Astrocyte of the cerebellum (primary cell): ENCODE measurements at regions of chr17 and their contacts with region 1.

Region 1: DNA sequence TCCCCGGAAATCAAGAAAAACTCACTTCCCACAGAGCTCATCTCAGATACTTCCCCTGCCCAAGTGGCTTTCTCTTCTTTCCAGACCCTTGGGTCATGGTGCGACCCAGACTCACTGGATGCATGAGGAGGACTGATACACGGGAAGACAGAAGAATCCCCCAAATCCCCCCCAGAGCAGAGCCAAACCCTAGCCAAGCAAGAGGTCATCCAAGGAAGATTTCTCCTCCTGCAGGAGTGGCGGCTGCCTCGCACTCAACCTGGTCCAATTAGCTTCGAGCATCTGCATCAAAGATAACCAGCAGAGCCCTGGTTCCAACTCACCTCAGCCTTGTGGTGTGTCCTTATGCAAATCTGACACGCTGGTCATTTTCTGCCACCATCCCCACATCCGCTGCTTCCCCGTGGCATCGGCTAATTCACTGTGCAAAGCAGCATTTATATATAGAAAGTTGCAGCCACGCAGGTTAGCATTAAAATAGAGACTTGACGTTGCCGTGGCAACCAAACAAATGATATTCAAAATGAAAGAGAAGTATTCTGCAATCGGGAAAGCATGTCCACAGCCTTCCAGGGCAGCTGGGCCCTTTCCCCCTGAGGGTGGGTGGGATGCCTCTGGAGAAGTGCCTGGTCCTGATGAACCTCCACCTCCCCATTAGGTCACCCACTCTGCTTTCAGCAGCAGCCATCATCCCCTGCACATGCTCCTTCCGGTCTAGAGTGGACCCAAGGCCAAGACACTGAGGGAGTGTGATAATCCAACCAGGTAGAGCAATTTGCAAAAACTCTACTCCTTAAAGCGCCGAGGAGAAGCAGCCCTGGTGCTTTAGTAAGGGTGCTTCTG is 138.8 kb downstream of the GAS7 start:
- DNase-seq: no peak
- H3K4me3 ChIP-seq: no peak overlapping the region
- CTCF ChIP-seq: no peak

Region 2: DNA sequence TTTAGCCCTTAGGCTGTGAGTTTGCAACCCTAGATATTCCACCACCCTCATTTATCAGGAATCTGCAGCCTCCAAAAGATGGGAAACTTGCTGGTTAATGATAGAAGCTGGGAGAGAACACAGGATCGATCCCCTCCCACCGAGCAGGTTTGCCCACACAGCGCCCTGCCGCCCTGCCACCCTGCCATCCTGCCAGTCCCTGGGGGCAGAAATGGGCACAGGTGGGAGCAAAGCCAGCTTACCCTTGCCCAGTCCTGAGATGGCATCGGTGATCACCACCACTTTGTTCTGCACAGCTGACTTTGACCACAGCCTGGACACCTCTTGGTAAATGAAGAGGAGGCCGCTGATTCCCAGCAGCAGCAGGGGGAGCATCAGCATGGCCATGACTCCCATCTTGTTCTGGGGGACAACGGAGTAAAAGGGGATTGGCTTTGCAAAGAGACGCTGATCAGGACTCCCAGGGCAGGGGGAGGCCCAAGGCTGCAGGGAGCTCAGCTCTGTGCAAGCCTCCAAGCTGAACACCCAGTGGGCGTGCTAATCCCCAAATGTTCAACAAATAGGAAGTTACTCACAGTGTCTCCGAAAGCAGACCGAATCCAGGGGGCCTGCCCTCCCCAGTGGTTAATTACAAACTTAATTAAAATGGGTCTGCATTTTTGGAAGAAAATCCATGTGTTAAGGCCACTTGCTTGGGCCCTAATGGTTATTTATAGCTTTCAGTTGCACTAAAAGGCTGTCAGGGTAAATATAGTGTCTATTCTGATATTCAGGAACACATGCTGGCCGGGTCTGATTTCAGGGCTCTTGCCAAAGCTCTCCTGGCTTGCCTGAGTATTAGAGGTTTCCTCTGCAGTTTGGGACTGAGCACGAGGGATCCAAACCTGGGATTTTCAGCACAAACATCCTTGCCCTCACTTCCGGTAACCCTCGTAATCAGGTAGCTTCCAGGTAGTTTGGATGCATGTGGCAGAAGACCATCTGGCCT is 268.4 kb before region 1 on chr17 and contains the start of gene DHRS7C:
- in situ Hi-C with region 1: no loop called
- DNase-seq: no peak
- H3K4me3 ChIP-seq: no peak within 1 kb of the TSS
- CTCF ChIP-seq: no peak

Region 3: DNA sequence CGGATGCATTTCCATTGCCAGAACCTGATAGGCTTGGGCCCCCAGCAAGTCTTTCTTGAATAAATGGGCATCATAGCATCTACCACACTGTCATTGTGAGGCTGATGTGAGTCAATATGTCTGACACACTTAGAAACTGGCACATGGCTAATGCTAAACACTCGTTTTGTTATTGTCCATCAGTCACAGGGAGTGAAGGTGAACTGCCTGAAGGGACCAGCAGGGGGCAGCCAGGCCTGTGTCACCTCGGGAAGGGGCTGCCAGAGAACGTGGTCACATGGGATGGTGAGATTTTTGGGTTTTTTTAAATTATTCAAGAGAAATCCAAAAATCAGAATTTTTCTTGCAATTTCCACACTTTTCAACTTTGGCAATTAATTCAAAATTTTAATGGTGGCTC is 153.7 kb before region 1 on chr17:
- in situ Hi-C with region 1: no loop called
- DNase-seq: no peak
- H3K4me3 ChIP-seq: no peak overlapping the region
- CTCF ChIP-seq: peak; percentile 52

Region 4: GRCh38 chr17:10198509-10199253 is 139.1 kb after region 1 on chr17 and contains the start of gene GAS7:
- in situ Hi-C with region 1: loop called (anchors 25 kb)
- DNase-seq: no peak
- H3K4me3 ChIP-seq: peak within 1 kb of the TSS; percentile 38
- CTCF ChIP-seq: no peak

Region 5: DNA sequence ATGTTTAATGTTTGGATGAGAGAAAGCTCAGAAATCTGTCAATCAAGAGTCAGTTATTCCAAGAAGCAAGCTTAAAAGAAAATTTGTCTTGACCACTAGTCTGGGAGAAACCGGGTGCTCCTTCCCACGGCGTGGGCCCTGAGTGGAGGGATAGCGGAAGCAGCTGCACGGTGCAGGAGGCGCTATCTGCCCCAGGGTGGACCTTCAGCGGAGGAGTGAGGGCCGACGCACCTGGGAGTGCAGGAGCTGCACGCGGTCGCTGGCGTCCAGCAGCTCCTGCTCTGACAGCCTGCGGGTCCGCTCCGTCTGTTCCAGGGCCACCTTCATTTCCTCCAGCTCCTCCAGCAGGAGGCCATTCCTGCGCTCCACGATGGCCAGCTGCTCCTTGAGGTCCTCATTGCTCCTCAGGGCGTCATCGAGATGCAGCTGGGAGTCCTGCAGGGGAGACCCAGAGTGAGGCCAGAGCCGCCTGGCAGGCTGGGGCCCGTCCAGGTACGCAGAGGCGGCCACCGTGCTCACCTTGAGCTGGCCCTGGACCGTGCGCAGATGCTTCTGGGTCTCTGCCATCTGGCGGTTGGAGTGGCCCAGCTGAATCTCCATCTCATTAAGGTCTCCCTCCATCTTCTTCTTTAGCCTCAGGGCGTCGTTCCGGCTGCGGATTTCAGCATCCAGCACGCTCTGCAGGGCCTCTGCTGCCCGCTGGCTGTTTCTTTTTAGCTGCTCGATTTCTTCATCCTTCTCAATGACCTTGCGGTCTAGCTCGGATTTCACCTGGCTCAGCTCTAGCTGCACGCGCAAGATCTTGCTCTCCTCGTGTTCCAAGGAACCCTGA is 249.6 kb after region 1 on chr17:
- in situ Hi-C with region 1: no loop called
- DNase-seq: no peak
- H3K4me3 ChIP-seq: no peak overlapping the region
- CTCF ChIP-seq: no peak